ENCODE measurements at regions of chr14 and their contacts with region 1.

Region 1: GRCh38 chr14:74881431-74882361 is at the start of gene DLST:
- DNase-seq: peak; percentile 84
- H3K4me3 Mint-ChIP-seq: peak within 1 kb of the TSS; percentile 99
- H3K27ac Mint-ChIP-seq: peak within 1 kb of the TSS; percentile 99
- H3K4me1 Mint-ChIP-seq: peaks cover 50% of the 10 kb centered on the region
- H3K27me3 Mint-ChIP-seq: no peaks in the 10 kb centered on the region
- CTCF ChIP-seq: no peak
- total RNA-seq, gene DLST: 114 and 139 TPM in 2 replicates

Region 2: GRCh38 chr14:74867673-74868072 is 14.0 kb before region 1 on chr14:
- CTCF ChIA-PET with region 1: interaction called, 204 read pairs
- POLR2A ChIA-PET with region 1: interaction called, 9 read pairs
- intact Hi-C with region 1: no loop called
- DNase-seq: no peak
- H3K4me3 Mint-ChIP-seq: no peak overlapping the region
- H3K27ac Mint-ChIP-seq: no peak overlapping the region
- H3K4me1 Mint-ChIP-seq: no peaks in the 10 kb centered on the region
- H3K27me3 Mint-ChIP-seq: peaks cover 23% of the 10 kb centered on the region
- CTCF ChIP-seq: no peak

Region 3: GRCh38 chr14:74893614-74894091 is 12.0 kb after region 1 on chr14:
- CTCF ChIA-PET with region 1: interaction called, 13 read pairs
- POLR2A ChIA-PET with region 1: interaction called, 22 read pairs
- intact Hi-C with region 1: no loop called
- DNase-seq: no peak
- H3K4me3 Mint-ChIP-seq: no peak overlapping the region
- H3K27ac Mint-ChIP-seq: no peak overlapping the region
- H3K4me1 Mint-ChIP-seq: peaks cover 5% of the 10 kb centered on the region
- H3K27me3 Mint-ChIP-seq: no peaks in the 10 kb centered on the region
- CTCF ChIP-seq: no peak